CD4-positive, alpha-beta memory T cell (primary cell): ENCODE measurements at regions of chr17 and their contacts with region 1.

Region 1: DNA sequence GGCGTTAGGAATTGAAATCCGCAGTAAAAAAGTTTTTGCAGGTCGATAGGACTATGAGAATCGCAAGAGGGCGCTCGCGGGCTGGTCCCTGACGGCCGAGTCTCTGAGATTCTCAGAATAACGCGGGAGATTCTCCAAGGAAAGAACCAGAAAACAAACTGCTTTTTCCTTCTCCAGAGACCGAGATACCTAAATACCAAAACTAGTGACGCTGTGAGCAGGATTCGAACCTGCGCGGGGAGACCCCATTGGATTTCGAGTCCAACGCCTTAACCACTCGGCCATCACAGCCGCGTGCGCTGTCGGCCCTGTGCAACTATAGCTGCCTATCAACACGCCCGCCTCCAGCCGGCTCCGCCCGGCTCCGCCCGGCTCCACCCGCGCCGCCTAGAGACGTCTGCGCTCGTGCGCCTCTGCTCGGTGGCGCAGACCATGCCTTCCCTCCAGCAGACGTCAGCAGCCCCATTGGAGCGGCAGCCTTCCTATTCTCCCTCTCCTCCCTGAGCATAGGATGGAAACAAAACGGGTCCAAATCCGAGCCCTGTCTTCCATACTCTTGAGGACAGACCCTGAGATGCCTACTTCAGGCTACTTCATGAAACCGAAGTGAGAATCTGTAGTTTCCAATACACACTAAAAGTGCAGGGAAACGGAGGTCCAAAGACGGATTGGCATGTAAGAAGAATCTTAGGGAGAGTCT is 13.4 kb downstream of the PER1 start:
- DNase-seq: peak; percentile 95 to 98 (median 96)
- H3K4me3 ChIP-seq: peak overlapping the region; percentile 60 to 74
- H3K4me3 Mint-ChIP-seq: no peak overlapping the region
- H3K27ac ChIP-seq: peak overlapping the region; percentile 78
- H3K27ac Mint-ChIP-seq: no peak overlapping the region
- H3K4me1 ChIP-seq: peaks cover 20% of the 10 kb centered on the region
- H3K4me1 Mint-ChIP-seq: peaks cover 0 to 8% (median 3%) of the 10 kb centered on the region in 4 donors
- H3K27me3 ChIP-seq: no peaks in the 10 kb centered on the region
- H3K27me3 Mint-ChIP-seq: no peaks in the 10 kb centered on the region

Region 2: GRCh38 chr17:8125157-8125946 is 13.5 kb before region 1 on chr17:
- CTCF ChIA-PET with region 1: interaction called, 63 read pairs
- POLR2A ChIA-PET with region 1: interaction called, 54 read pairs
- intact Hi-C with region 1: loop called (anchors 1 kb)
- DNase-seq: peak; percentile 83 to 90 (median 87)
- H3K4me3 ChIP-seq: peak overlapping the region; percentile 53 to 68
- H3K4me3 Mint-ChIP-seq: peak overlapping the region; percentile 85 to 99 (median 92)
- H3K27ac ChIP-seq: no peak overlapping the region
- H3K27ac Mint-ChIP-seq: peak overlapping the region; percentile 69 to 100 (median 93)
- H3K4me1 ChIP-seq: peaks cover 63% of the 10 kb centered on the region
- H3K4me1 Mint-ChIP-seq: peaks cover 42 to 62% (median 51%) of the 10 kb centered on the region in 4 donors
- H3K27me3 ChIP-seq: peaks cover 20% of the 10 kb centered on the region
- H3K27me3 Mint-ChIP-seq: peaks cover 10 to 28% of the 10 kb centered on the region in 2 donors

Region 3: GRCh38 chr17:8156246-8156992 is 17.6 kb after region 1 on chr17:
- CTCF ChIA-PET with region 1: interaction called, 93 read pairs
- POLR2A ChIA-PET with region 1: interaction called, 237 read pairs
- intact Hi-C with region 1: loop called (anchors 1 kb)
- DNase-seq: peak; percentile 100
- H3K4me3 ChIP-seq: peak overlapping the region; percentile 90
- H3K4me3 Mint-ChIP-seq: no peak overlapping the region
- H3K27ac ChIP-seq: peak overlapping the region; percentile 100
- H3K27ac Mint-ChIP-seq: no peak overlapping the region
- H3K4me1 ChIP-seq: peaks cover 85% of the 10 kb centered on the region
- H3K4me1 Mint-ChIP-seq: peaks cover 38 to 71% (median 55%) of the 10 kb centered on the region in 4 donors
- H3K27me3 ChIP-seq: no peaks in the 10 kb centered on the region
- H3K27me3 Mint-ChIP-seq: no peaks in the 10 kb centered on the region

Region 4: DNA sequence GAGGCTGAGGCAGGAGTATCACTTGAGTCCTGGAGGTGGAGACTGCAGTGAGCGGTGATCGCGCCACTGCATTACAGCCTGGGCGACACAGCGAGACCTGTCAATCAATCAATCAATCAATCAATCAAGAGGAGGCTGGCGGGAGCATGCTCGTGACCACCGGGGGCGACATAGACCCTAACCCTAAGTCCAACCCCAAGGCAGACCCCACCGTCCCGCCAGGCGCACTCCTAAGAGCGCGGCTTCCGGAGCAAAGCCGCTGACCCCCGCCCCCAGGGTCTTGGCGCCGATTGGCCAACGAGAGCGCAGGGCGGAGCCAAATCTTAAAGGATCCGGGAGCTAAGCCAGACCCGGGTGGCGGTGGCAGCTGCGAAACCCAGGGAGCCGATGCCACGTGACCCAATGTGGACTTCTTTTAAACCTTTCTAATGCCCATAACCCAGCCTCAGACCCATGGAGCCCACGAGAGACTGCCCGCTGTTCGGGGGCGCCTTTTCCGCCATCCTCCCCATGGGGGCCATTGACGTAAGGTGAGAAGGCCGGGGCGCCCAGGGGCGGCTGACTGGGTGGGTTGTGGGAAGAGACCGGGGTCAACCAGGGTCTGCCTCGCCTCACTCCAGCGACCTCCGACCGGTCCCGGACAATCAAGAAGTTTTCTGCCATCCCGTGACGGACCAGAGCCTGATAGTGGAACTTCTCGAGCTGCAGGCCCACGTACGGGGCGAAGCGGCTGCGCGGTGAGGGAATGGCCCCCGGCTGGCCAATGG is 149.7 kb after region 1 on chr17 and contains the start of gene RANGRF:
- CTCF ChIA-PET with region 1: interaction called, 5 read pairs
- POLR2A ChIA-PET with region 1: interaction called, 10 read pairs
- intact Hi-C with region 1: no loop called
- DNase-seq: peak; percentile 70 to 83 (median 73)
- H3K4me3 ChIP-seq: peak within 1 kb of the TSS; percentile 88 to 98
- H3K4me3 Mint-ChIP-seq: peak within 1 kb of the TSS; percentile 93 to 98 (median 97)
- H3K27ac ChIP-seq: peak within 1 kb of the TSS; percentile 83
- H3K27ac Mint-ChIP-seq: peak within 1 kb of the TSS; percentile 94 to 98 (median 97)
- H3K4me1 ChIP-seq: peaks cover 49% of the 10 kb centered on the region
- H3K4me1 Mint-ChIP-seq: peaks cover 23 to 69% (median 44%) of the 10 kb centered on the region in 4 donors
- H3K27me3 ChIP-seq: no peaks in the 10 kb centered on the region
- H3K27me3 Mint-ChIP-seq: no peaks in the 10 kb centered on the region
- total RNA-seq, gene RANGRF: 39.7 to 42.8 TPM

Region 5: GRCh38 chr17:8300627-8301242 is 161.9 kb after region 1 on chr17:
- CTCF ChIA-PET with region 1: interaction called, 13 read pairs
- POLR2A ChIA-PET with region 1: interaction called, 19 read pairs
- intact Hi-C with region 1: loop called (anchors 1 kb)
- DNase-seq: peak; percentile 62 to 76 (median 72)
- H3K4me3 ChIP-seq: no peak overlapping the region
- H3K4me3 Mint-ChIP-seq: peak overlapping the region in 2 of 8 donors; percentile 2
- H3K27ac ChIP-seq: no peak overlapping the region
- H3K27ac Mint-ChIP-seq: peak overlapping the region in 6 of 7 donors; percentile 47 to 90 (median 83)
- H3K4me1 ChIP-seq: peaks cover 7% of the 10 kb centered on the region
- H3K4me1 Mint-ChIP-seq: peaks cover 7 to 16% (median 11%) of the 10 kb centered on the region in 4 donors
- H3K27me3 ChIP-seq: no peaks in the 10 kb centered on the region
- H3K27me3 Mint-ChIP-seq: peaks cover 0 to 1% of the 10 kb centered on the region in 2 donors

Region 6: GRCh38 chr17:8354236-8354635 is 215.4 kb after region 1 on chr17:
- CTCF ChIA-PET with region 1: no interaction called
- POLR2A ChIA-PET with region 1: no interaction called
- intact Hi-C with region 1: no loop called
- DNase-seq: no peak
- H3K4me3 ChIP-seq: no peak overlapping the region
- H3K4me3 Mint-ChIP-seq: no peak overlapping the region
- H3K27ac ChIP-seq: no peak overlapping the region
- H3K27ac Mint-ChIP-seq: no peak overlapping the region
- H3K4me1 ChIP-seq: no peaks in the 10 kb centered on the region
- H3K4me1 Mint-ChIP-seq: peaks cover 0 to 4% (median 0%) of the 10 kb centered on the region in 4 donors
- H3K27me3 ChIP-seq: no peaks in the 10 kb centered on the region
- H3K27me3 Mint-ChIP-seq: peaks cover 3 to 6% of the 10 kb centered on the region in 2 donors